Endothelial cell of umbilical vein (primary cell): ENCODE measurements at regions of chr12 and their contacts with region 1.

Region 1: DNA sequence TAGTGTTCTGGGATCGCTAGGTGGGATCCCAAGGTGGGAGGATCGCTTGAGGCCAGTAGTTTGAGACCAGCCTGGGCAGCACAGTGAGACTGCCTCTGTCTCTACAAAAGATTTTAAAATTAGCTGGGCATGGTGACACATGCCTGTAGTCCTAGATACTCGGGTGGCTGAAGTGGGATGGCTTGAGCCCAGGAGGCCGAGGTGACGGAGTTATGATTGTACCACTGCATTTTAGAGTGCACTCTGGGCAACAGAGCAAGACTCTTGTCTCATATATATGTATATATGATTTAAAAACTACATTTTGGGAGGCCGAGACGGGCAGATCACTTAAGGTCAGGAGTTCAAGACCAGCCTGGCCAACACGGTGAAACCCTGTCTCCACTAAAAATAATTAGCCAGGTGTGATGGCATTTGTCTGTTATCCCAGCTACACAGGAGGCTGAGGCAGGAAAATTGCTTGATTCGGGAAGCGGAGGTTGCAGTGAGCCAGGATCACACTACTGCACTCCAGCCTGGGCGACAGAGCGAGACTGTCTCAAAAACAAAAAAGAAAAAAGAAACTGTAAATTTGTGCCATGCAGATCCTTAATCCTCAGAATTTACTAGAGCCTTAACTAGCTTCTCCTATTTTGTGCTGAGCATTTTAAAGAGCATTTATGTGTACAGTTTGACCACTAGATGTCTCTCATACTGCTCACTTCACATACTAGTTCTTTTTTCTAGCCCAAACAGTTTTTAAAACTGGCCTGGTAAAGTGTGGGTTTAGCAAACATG is 114.8 kb downstream of the MON2 start:
- DNase-seq: peak; percentile 58
- H3K4me3 ChIP-seq: no peak overlapping the region
- H3K27ac ChIP-seq: no peak overlapping the region
- H3K4me1 ChIP-seq: no peaks in the 10 kb centered on the region
- H3K27me3 ChIP-seq: no peaks in the 10 kb centered on the region
- CTCF ChIP-seq: peak; percentile 43 to 58
- POLR2A ChIP-seq: no peak

Region 2: GRCh38 chr12:62597253-62597652 is 15.8 kb after region 1 on chr12:
- CTCF ChIA-PET with region 1: interaction called, 44 read pairs
- POLR2A ChIA-PET with region 1: interaction called, 3 read pairs
- dilution Hi-C with region 1: no loop called
- intact Hi-C with region 1: no loop called
- DNase-seq: no peak
- H3K4me3 ChIP-seq: no peak overlapping the region
- H3K27ac ChIP-seq: no peak overlapping the region
- H3K4me1 ChIP-seq: peaks cover 5% of the 10 kb centered on the region
- H3K27me3 ChIP-seq: no peaks in the 10 kb centered on the region
- CTCF ChIP-seq: no peak
- POLR2A ChIP-seq: no peak